Natural killer cell (primary cell): ENCODE measurements at regions of chr21 and their contacts with region 1.

Region 1: GRCh38 chr21:46184625-46185555 is 631 bp upstream of the SPATC1L start:
- DNase-seq: peak; percentile 74 to 83
- ATAC-seq: peak in 2 of 3 donors; percentile 85 to 86
- H3K4me3 ChIP-seq: peak overlapping the region; percentile 71
- H3K4me3 Mint-ChIP-seq: peak overlapping the region; percentile 71
- H3K27ac ChIP-seq: peak overlapping the region; percentile 74
- H3K27ac Mint-ChIP-seq: peak overlapping the region; percentile 82 to 87
- H3K4me1 ChIP-seq: peaks cover 16% of the 10 kb centered on the region
- H3K4me1 Mint-ChIP-seq: no peaks in the 10 kb centered on the region
- H3K27me3 ChIP-seq: no peaks in the 10 kb centered on the region
- H3K27me3 Mint-ChIP-seq: no peaks in the 10 kb centered on the region
- CTCF ChIP-seq: no peak

Region 2: DNA sequence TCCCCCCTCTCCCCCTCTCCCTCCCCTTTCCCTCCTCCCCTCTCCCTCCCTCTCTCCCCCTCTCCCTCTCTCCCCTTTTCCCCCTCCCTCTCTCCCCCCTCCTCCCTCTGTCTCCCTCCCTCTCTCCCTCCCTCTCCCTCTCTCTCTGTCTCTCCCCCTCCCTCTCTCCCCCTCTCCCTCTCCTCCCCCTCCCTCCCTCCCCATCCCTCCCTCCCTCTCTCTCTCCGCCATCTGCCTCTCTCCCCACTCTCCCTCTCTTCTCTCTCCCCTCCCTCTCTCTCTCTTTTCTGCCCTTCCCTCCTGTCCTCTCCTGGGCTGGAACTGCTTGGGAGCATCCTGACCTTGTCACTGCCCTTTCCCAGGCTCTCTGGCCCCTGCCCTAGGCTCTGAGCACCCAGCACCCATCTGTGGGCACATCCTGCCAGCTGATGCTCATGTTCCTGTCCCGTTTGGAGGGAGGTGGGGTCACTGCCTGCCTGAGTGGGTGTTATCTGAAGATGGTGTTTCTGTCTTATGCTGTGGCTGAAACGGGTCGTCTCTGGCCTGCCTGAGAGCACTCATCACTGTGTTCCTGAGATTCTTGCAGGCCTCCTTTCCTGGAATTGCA is 40.3 kb before region 1 on chr21:
- intact Hi-C with region 1: loop called (anchors 5 kb)
- DNase-seq: no peak
- ATAC-seq: no peak
- H3K4me3 ChIP-seq: no peak overlapping the region
- H3K4me3 Mint-ChIP-seq: peak overlapping the region; percentile 64
- H3K27ac ChIP-seq: no peak overlapping the region
- H3K27ac Mint-ChIP-seq: peak overlapping the region; percentile 85 to 88
- H3K4me1 ChIP-seq: peaks cover 4% of the 10 kb centered on the region
- H3K4me1 Mint-ChIP-seq: peaks cover 8 to 12% of the 10 kb centered on the region in 2 donors
- H3K27me3 ChIP-seq: no peaks in the 10 kb centered on the region
- H3K27me3 Mint-ChIP-seq: peaks cover 0 to 4% of the 10 kb centered on the region in 2 donors
- CTCF ChIP-seq: no peak

Region 3: GRCh38 chr21:46228345-46229051 is 43.6 kb after region 1 on chr21 and contains the start of gene LSS:
- intact Hi-C with region 1: loop called (anchors 2 kb)
- DNase-seq: peak; percentile 93 to 99
- ATAC-seq: peak; percentile 91 to 97 (median 95)
- H3K4me3 ChIP-seq: peak within 1 kb of the TSS; percentile 82
- H3K4me3 Mint-ChIP-seq: peak within 1 kb of the TSS; percentile 95
- H3K27ac ChIP-seq: peak within 1 kb of the TSS; percentile 59
- H3K27ac Mint-ChIP-seq: peak within 1 kb of the TSS; percentile 78 to 88
- H3K4me1 ChIP-seq: peaks cover 23% of the 10 kb centered on the region
- H3K4me1 Mint-ChIP-seq: peaks cover 74 to 75% of the 10 kb centered on the region in 2 donors
- H3K27me3 ChIP-seq: no peaks in the 10 kb centered on the region
- H3K27me3 Mint-ChIP-seq: no peaks in the 10 kb centered on the region
- CTCF ChIP-seq: no peak
- total RNA-seq, gene LSS: 59.9 to 82.2 (median 62.7) TPM